Body of pancreas (tissue), 4 donors: ENCODE measurements at regions of chr3 and their contacts with region 1.

Region 1: DNA sequence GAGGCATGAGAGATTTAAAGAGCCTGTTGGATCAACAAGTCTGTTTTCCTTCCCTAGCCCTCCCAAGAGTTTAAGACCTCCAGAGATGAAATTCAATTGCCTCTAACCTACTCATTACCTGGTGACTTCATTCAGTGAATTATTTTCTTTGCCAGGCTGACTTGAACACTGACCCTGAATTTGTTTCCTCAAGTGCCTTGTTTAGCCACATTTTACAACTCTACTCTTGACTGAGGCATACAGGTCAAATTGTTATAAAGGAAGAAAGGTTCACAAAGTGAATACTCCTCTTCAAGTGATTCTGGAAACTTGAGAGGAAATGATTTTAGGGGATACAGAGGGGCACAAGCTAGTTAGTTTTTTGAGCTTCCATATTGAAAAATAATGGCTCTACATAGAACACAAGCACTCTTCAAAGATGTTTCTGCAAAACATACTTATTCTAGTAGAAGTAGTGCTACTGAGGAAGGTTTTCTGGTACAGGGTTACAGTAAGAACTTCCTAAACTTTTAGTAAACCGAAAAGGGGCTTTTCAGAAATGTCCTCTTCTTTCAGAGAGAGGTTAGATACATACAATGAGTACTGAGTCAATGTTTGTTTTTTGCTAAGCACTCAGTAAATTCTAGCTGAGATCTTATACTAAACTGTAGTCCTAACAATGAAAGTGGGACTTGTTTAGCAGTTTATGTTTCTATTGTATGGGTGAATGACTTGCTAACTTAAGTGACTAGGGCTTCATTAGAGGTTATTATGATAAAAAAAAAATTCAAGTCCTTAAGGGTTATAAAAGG is 137.4 kb upstream of the SATB1 start:
- DNase-seq: no peak
- ATAC-seq: no peak
- H3K4me3 ChIP-seq: no peak overlapping the region
- H3K27ac ChIP-seq: no peak overlapping the region
- H3K4me1 ChIP-seq: peaks cover 8% of the 10 kb centered on the region
- H3K27me3 ChIP-seq: no peaks in the 10 kb centered on the region
- CTCF ChIP-seq: no peak
- POLR2A ChIP-seq: no peak

Region 2: DNA sequence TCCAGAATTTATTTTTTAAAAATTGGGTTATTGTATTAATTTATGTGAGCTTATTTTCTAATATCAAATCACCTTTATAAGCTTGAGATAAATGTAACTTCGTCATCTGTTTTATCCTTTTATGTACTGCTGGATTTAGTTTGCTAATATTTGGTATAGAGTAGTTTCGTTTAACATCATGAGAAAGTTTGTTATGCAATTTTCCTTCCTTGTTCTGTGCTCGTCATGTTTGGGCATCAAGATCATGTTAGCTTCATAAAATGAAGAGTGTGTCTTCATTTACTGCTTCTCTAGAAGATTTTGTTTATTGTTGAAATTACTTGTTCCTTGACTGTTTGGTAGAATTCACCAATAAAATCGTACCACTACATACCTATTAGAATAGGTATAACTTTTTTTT is 124.7 kb after region 1 on chr3:
- intact Hi-C with region 1: no loop called
- DNase-seq: no peak
- ATAC-seq: no peak
- H3K4me3 ChIP-seq: no peak overlapping the region
- H3K27ac ChIP-seq: no peak overlapping the region
- H3K4me1 ChIP-seq: no peaks in the 10 kb centered on the region
- H3K27me3 ChIP-seq: no peaks in the 10 kb centered on the region
- CTCF ChIP-seq: no peak
- POLR2A ChIP-seq: no peak

Region 3: GRCh38 chr3:18766974-18767373 is 204.4 kb after region 1 on chr3:
- intact Hi-C with region 1: loop called (anchors 10 kb)
- DNase-seq: no peak
- ATAC-seq: no peak
- H3K4me3 ChIP-seq: no peak overlapping the region
- H3K27ac ChIP-seq: no peak overlapping the region
- H3K4me1 ChIP-seq: no peaks in the 10 kb centered on the region
- H3K27me3 ChIP-seq: no peaks in the 10 kb centered on the region
- CTCF ChIP-seq: no peak
- POLR2A ChIP-seq: no peak

Region 4: DNA sequence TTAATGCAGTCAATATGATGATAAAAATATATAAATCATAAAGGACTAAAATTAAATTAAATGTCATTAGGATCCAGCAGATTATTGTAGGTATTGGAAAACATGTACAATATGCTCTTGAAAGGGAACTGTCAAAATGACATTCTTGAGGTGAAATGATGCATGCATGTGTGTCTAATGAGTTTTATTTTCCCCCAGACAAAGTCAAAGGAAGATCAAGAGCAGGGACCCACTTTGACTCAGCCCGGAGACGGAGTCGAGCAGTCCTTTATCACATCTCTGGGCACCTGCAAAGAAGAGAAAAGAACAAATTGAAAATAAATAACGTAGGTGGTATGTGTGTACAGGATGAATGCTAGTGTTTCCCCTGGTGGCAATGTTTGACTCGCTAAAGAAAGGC is 779.8 kb after region 1 on chr3:
- intact Hi-C with region 1: no loop called
- DNase-seq: no peak
- ATAC-seq: no peak
- H3K4me3 ChIP-seq: no peak overlapping the region
- H3K27ac ChIP-seq: no peak overlapping the region
- H3K4me1 ChIP-seq: no peaks in the 10 kb centered on the region
- H3K27me3 ChIP-seq: no peaks in the 10 kb centered on the region
- CTCF ChIP-seq: no peak
- POLR2A ChIP-seq: no peak